ENCODE measurements at regions of chr1 and their contacts with region 1.

Region 1: GRCh38 chr1:203625628-203626019 is 1.0 kb upstream of the ATP2B4 start:
- DNase-seq: peak; percentile 81
- H3K4me3 ChIP-seq: no peak overlapping the region
- H3K27ac ChIP-seq: peak overlapping the region; percentile 74
- H3K4me1 ChIP-seq: peaks cover 6% of the 10 kb centered on the region
- H3K27me3 ChIP-seq: no peaks in the 10 kb centered on the region
- CTCF ChIP-seq: peak; percentile 20

Region 2: GRCh38 chr1:203504397-203505250 is 121.0 kb before region 1 on chr1:
- intact Hi-C with region 1: loop called (anchors 10 kb)
- DNase-seq: peak; percentile 85
- H3K4me3 ChIP-seq: no peak overlapping the region
- H3K27ac ChIP-seq: no peak overlapping the region
- H3K4me1 ChIP-seq: no peaks in the 10 kb centered on the region
- H3K27me3 ChIP-seq: no peaks in the 10 kb centered on the region
- CTCF ChIP-seq: peak; percentile 80

Region 3: GRCh38 chr1:203692565-203693470 is 67.2 kb after region 1 on chr1:
- intact Hi-C with region 1: loop called (anchors 2 kb)
- DNase-seq: peak; percentile 80
- H3K4me3 ChIP-seq: no peak overlapping the region
- H3K27ac ChIP-seq: peak overlapping the region; percentile 66
- H3K4me1 ChIP-seq: peaks cover 6% of the 10 kb centered on the region
- H3K27me3 ChIP-seq: no peaks in the 10 kb centered on the region
- CTCF ChIP-seq: no peak